Kidney (tissue), 22 donors: ENCODE measurements at regions of chr16 and their contacts with region 1.

Region 1: DNA sequence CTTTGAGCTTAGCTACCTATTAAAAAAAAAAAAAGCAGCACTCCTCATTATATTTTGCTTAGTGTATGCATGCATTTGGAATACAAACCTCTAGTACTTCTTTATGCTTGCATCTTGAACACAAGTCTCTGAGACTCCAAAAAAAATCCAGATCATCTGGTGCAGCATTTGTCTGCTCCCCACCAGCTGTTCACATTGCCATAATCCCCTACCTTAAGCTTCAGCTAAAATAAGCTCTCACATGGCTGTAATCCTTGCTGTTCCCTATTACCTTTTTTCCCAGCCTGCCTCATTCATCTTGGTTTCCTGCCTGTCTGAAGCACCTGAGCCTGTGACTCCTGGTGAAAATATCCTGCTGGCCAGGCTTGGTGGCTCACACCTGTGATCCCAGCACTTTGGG is 7.5 kb upstream of the NFATC2IP start:
- DNase-seq: no peak
- H3K4me3 ChIP-seq: no peak overlapping the region
- H3K27ac ChIP-seq: no peak overlapping the region
- H3K4me1 ChIP-seq: peaks cover 0 to 6% (median 0%) of the 10 kb centered on the region in 3 donors
- H3K27me3 ChIP-seq: no peaks in the 10 kb centered on the region
- CTCF ChIP-seq: no peak

Region 2: GRCh38 chr16:28879841-28880588 is 63.3 kb before region 1 on chr16:
- intact Hi-C with region 1: loop called (anchors 10 kb)
- DNase-seq: peak; percentile 94 to 96 (median 96)
- H3K4me3 ChIP-seq: peak overlapping the region; percentile 64 to 70 (median 65)
- H3K27ac ChIP-seq: no peak overlapping the region
- H3K4me1 ChIP-seq: peaks cover 0 to 11% (median 3%) of the 10 kb centered on the region in 3 donors
- H3K27me3 ChIP-seq: no peaks in the 10 kb centered on the region
- CTCF ChIP-seq: no peak

Region 3: DNA sequence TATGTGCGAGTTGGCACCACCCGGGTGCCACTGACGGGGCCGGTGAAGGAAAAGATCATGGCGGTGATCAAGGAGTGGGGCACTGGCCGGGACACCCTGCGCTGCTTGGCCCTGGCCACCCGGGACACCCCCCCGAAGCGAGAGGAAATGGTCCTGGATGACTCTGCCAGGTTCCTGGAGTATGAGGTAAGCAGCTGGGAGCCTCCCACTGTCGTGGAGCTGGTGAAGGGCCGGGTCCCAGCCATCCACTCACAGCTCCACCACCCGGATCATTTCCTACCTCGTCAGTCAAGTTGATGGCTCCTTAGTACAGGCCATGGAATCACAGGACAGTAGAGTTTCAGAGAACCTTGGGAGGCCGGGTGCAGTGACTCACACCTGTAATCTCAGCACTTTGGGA is 45.0 kb before region 1 on chr16:
- intact Hi-C with region 1: no loop called
- DNase-seq: no peak
- H3K4me3 ChIP-seq: no peak overlapping the region
- H3K27ac ChIP-seq: no peak overlapping the region
- H3K4me1 ChIP-seq: no peaks in the 10 kb centered on the region
- H3K27me3 ChIP-seq: no peaks in the 10 kb centered on the region
- CTCF ChIP-seq: no peak